ENCODE measurements at regions of chr7 and their contacts with region 1.

Region 1: DNA sequence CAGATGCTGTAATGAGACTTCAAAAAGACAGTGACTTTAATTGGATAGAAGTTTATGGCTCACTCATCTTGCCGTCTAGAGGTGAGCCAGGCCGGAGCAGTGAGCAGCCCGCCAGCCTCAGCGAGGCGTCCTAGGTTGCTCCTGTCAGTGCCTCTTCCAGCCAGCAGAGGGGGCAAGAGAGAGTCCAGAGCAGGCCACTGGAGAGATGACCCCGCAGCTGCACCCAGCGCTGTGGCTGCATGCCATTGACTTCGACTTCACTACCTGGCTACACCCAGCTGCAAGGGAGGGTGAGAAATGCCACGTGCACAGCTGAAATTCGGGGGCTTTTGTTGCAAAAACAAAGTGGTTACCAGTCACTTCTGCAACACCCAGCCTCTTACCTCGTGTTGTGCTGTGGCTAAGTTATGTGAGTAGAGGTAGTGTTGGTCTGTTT is 26.5 kb downstream of the NUB1 start:
- DNase-seq: peak; percentile 40 to 96 (median 76)

Region 2: DNA sequence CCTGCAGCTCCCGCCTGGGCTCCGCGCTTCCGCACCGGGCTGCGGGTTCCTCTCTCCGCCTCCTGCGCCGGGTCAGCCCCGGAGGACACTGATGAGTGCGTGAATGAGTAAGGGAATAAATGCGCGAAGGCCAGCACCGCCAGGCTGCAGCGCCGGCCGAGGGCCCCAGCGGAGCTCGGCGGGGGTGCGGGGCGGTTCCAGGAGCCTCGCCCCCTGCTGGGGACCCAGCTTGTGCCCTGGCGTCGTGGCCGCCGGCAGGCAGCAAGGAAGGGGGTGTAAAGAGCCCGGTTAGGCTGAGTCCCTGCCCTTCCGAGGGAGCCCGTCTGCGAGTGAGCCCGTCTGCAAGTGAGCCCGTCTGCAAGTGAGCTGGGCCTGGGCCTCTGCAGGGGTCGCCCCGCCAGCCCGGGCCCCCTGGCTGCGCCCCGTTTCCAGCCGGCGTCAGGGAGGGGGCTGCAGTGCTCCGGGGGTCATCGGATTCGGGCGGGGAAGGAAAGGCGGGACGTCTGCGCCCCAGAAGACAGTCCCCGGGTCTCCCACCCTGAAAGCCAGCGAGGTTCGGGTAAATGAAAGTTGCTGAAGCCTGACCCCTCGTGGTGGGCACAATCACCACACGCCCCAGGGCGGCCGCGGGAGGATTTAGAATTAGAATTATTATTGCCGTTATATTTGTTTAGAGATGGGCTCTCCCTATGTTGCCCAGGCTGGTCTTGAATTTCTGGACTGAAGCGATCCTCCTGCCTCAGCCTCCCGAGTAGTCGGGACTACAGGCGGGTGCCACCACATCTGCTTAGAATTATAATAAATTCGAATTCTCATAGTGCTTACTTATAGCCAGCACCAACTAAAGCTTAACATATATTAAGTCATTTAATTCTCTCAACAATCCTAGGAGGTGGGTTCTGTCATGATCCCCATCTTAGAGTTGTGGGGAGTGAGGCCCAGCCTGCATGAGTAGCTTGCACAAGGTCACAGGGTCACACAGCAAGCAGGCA is 80.4 kb after region 1 on chr7:
- intact Hi-C with region 1: loop called (anchors 5 kb)
- DNase-seq: peak in 8 of 10 donors; percentile 53 to 89 (median 62)

Region 3: GRCh38 chr7:151631968-151632749 is 264.0 kb after region 1 on chr7:
- intact Hi-C with region 1: loop called (anchors 10 kb)
- DNase-seq: peak; percentile 65 to 96 (median 75)

Region 4: DNA sequence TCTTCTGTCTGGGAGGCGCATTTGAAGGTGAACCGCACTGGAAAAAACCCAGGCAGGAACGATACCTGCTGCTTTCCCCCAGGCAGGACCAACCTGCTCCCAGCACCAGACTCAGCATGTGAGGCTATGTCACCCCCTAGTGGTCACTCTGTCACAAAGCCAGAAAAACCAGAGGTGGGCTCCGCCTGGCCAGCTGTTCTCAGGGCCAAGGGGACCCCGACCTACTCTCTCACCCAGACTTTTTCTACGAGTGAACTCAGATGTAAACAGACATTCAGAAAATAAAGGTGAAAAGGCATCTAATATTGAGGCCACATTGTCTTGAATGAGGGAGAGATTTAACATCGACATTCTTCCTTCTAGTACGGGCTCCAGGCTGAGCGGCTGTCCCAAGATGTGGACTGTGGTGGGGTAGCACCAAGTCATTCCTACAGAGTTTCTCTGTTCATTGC is 391.5 kb after region 1 on chr7:
- intact Hi-C with region 1: loop called (anchors 2 kb)
- DNase-seq: peak in 7 of 10 donors; percentile 48 to 92 (median 57)

Measured in posterior cingulate gyrus (tissue), 11 donors.